ENCODE measurements at regions of chr12 and their contacts with region 1.

Region 1: GRCh38 chr12:54379401-54380201 is 4.9 kb downstream of the ZNF385A start:
- DNase-seq: peak; percentile 74
- ATAC-seq: peak; percentile 83
- H3K4me3 ChIP-seq: peak overlapping the region; percentile 45 to 66
- H3K27ac ChIP-seq: peak overlapping the region; percentile 77
- H3K4me1 ChIP-seq: peaks cover 21 to 59% of the 10 kb centered on the region in 2 experiments
- H3K27me3 ChIP-seq: no peaks in the 10 kb centered on the region
- CTCF ChIP-seq: peak in 2 of 3 experiments; percentile 100; a peak in 4 of 6 replicates
- POLR2A ChIP-seq: no peak
- RAD21 ChIP-seq: no peak

Region 2: DNA sequence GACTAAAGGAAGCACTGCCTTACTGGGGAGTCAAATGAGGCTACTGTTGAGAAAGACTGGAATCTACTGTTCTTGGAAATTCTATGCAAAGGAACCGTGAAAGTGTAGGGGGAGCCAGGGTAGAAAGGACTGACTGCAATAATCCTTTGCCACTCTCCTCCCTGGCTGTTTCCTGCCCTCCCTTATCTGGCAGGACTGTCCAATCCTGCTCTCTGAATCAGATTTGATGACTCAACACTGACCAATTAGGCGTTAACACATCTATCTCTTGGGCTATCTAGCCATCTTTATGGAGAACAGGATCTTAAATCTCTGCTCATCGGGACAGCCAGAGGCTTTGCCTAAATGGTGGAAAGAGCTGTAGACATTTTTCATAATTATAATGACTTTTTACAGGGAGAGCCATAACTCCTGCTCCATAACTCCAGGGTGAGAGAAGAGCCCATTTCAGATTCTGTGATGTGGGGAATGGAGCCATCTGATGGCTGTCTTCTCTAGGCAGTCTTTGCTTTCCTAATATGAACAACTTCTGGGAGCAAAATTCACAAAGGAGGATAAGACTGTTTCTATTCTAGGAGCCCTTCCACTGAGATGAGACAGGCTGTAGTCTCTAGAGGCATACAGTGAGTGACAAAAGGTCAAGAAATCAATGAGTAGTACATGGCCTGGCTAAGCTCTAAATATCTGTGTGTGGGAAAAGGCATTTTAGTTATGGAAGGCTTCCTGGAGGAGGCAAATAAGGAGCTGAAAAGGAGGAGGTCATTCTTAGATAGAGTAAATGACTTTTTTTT is 558.9 kb before region 1 on chr12:
- CTCF ChIA-PET with region 1: no interaction called
- POLR2A ChIA-PET with region 1: no interaction called
- RAD21 ChIA-PET with region 1: no interaction called
- intact Hi-C with region 1: no loop called
- DNase-seq: no peak
- ATAC-seq: peak; percentile 73
- H3K4me3 ChIP-seq: no peak overlapping the region
- H3K27ac ChIP-seq: no peak overlapping the region
- H3K4me1 ChIP-seq: peaks cover 11 to 27% of the 10 kb centered on the region in 2 experiments
- H3K27me3 ChIP-seq: no peaks in the 10 kb centered on the region
- CTCF ChIP-seq: no peak
- POLR2A ChIP-seq: no peak
- RAD21 ChIP-seq: no peak

Region 3: DNA sequence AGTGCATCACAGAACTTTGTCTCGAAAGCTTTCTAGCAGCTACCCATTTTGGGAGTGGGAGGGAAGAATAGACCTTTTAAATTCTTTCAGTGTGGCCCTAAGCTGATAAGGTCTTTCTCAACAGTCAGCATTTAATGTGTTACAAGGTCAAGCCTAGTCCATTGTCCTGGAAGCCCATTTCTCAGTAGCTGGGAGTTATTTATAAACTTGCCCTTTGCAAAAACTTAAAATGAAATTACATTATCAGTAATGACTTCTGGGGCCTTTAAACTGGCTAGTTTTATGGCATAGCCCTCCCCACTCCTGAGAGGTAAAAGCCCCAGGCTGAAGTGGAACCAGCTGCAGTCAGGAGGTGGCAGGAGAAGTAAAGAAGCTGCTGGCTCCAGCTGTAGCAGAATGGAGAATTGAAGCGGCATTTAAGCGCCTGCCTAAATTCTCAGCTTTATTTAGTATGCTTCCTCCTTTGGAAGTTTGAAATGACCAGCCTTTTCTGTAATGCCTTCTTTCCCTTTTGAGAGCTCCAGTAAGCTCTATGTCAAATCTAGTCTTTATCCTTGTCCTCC is 42.2 kb before region 1 on chr12:
- CTCF ChIA-PET with region 1: interaction called, 13 read pairs
- POLR2A ChIA-PET with region 1: no interaction called
- RAD21 ChIA-PET with region 1: interaction called in 1 of 2 experiments, 3 read pairs
- intact Hi-C with region 1: no loop called
- DNase-seq: no peak
- ATAC-seq: no peak
- H3K4me3 ChIP-seq: no peak overlapping the region
- H3K27ac ChIP-seq: no peak overlapping the region
- H3K4me1 ChIP-seq: peaks cover 4 to 9% of the 10 kb centered on the region in 2 experiments; a peak in 3 of 4 replicates
- H3K27me3 ChIP-seq: no peaks in the 10 kb centered on the region
- CTCF ChIP-seq: no peak
- POLR2A ChIP-seq: no peak
- RAD21 ChIP-seq: no peak

Region 4: GRCh38 chr12:54368709-54369583 is 10.7 kb before region 1 on chr12:
- CTCF ChIA-PET with region 1: interaction called, 51 read pairs
- POLR2A ChIA-PET with region 1: interaction called, 3 read pairs
- RAD21 ChIA-PET with region 1: interaction called, 7 read pairs
- intact Hi-C with region 1: no loop called
- DNase-seq: peak; percentile 67
- ATAC-seq: peak; percentile 72
- H3K4me3 ChIP-seq: no peak overlapping the region
- H3K27ac ChIP-seq: no peak overlapping the region
- H3K4me1 ChIP-seq: peaks cover 30 to 58% of the 10 kb centered on the region in 2 experiments
- H3K27me3 ChIP-seq: no peaks in the 10 kb centered on the region
- CTCF ChIP-seq: peak; percentile 87 to 96 (median 90)
- POLR2A ChIP-seq: no peak
- RAD21 ChIP-seq: peak; percentile 90

Measured in HCT116 (cell line).